ENCODE measurements at regions of chr15 and their contacts with region 1.

Region 1: DNA sequence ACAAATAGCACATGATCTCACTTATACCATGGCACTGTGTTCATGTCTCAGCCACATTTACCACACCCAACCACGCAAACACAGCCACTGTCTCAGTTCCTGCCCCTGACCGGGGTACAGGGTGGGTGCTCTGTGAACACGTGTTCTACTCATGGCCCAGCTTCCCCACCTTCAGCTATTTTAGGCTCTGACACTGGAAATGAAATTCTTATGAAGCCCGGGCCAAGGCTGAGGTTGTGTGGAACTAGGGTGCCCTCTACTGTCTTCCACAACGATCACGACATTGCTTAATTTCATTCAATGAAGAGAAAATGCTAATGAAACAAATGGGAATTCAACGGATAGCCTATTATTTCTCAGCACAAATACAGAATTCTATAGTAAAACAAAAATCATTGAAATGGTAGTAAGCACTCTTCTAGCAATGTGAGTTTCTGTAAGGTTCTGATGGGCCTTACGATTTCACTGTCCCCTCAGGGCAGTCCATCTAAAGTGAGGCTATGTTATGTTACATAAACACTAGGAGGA is 2.1 kb upstream of the GABRA5 start:
- DNase-seq: peak in 5 of 10 donors; percentile 32 to 85 (median 51)

Region 2: GRCh38 chr15:26037369-26037768 is 827.4 kb before region 1 on chr15:
- intact Hi-C with region 1: loop called (anchors 5 kb)
- DNase-seq: no peak

Measured in posterior cingulate gyrus (tissue), 11 donors.